SK-N-SH (cell line): ENCODE measurements at regions of chr1 and their contacts with region 1.

Region 1: GRCh38 chr1:43934101-43934985 is 742 bp downstream of the ARTN start:
- DNase-seq: peak; percentile 96
- H3K4me3 ChIP-seq: no peak overlapping the region; a peak in 1 of 4 replicates
- H3K27ac ChIP-seq: no peak overlapping the region
- H3K4me1 ChIP-seq: peaks cover 0 to 10% of the 10 kb centered on the region in 2 experiments; a peak in 2 of 4 replicates
- H3K27me3 ChIP-seq: no peaks in the 10 kb centered on the region
- CTCF ChIP-seq: peak; percentile 93
- EP300 ChIP-seq: no peak
- RAD21 ChIP-seq: peak; percentile 92

Region 2: DNA sequence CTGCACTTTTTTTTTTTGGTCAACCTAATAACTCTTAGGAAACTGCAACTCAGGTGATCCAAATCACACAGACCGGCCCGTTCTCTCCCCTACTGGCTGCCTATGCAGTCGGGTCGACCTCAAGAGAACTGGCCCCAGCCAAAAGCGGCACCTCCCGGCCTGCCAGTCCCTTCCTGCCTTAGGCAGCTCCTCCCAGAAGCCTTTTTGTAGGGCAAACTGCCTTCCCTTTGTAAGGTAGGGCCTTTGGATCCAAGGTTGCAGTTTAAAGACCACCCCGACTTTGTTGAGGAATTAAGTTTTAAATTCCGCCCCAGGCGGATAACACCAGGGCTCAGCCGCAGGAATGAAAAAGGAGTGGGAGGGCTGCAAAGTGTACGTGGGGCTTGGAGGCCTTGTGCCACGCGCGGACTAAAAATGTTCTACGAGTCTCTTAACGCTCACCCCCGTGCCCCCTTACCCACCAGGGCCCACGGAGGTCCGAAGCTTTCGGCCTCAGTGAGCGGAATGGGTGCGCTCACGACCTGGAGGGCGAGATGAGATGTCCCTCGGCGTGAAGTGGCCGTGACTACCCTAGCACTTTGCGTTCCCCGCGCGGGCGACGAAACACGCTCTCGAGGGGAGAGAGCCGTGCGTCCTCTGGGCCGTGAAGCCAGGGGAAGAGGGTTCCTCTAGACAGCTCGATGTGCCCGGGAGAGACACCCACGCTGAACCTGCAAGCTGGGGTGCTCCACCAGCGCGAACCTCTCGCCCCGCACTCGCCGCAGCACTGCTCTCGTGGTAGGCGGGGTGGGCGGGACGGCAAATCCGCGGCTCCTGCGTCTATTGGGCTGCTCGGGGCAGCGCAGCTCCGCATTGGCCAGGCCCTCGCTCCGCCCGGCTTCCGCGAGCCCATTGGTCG is 227.5 kb before region 1 on chr1:
- CTCF ChIA-PET with region 1: interaction called, 12 read pairs
- POLR2A ChIA-PET with region 1: interaction called, 4 read pairs
- DNase-seq: peak; percentile 97
- H3K4me3 ChIP-seq: peak overlapping the region; percentile 83 to 93
- H3K27ac ChIP-seq: peak overlapping the region; percentile 41 to 73; a peak in 3 of 4 replicates
- H3K4me1 ChIP-seq: peaks cover 13 to 24% of the 10 kb centered on the region in 2 experiments
- H3K27me3 ChIP-seq: no peaks in the 10 kb centered on the region
- CTCF ChIP-seq: no peak
- EP300 ChIP-seq: no peak
- RAD21 ChIP-seq: no peak

Region 3: GRCh38 chr1:43839056-43839455 is 95.3 kb before region 1 on chr1:
- CTCF ChIA-PET with region 1: interaction called, 20 read pairs
- POLR2A ChIA-PET with region 1: no interaction called
- DNase-seq: peak; percentile 51
- H3K4me3 ChIP-seq: no peak overlapping the region
- H3K27ac ChIP-seq: peak overlapping the region in 1 of 2 experiments; percentile 2; a peak in 2 of 4 replicates
- H3K4me1 ChIP-seq: peaks cover 31 to 43% of the 10 kb centered on the region in 2 experiments
- H3K27me3 ChIP-seq: no peaks in the 10 kb centered on the region
- CTCF ChIP-seq: no peak
- EP300 ChIP-seq: peak in 1 of 2 experiments; percentile 48; a peak in 1 of 4 replicates
- RAD21 ChIP-seq: no peak

Region 4: DNA sequence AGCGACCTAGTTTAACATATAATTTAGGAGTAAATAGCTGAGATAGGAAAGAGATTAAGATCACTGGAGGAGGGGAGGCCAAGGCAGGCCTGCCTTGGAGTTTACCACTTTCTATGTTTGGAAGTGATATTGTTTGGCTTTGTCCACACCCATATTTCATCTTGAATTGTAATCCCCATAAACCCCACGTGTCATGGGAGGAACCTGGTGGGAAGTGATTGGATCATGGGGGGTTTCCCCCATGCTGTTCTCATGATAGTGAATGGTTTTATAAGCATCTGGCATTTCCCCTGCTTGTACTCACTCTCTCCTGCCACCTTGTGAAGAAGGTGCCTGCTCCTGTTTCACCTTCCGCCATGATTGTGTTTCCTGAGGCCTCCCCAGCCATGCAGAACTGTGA is 59.0 kb before region 1 on chr1:
- CTCF ChIA-PET with region 1: interaction called, 23 read pairs
- POLR2A ChIA-PET with region 1: no interaction called
- DNase-seq: no peak
- H3K4me3 ChIP-seq: no peak overlapping the region
- H3K27ac ChIP-seq: no peak overlapping the region
- H3K4me1 ChIP-seq: peaks cover 0 to 15% of the 10 kb centered on the region in 2 experiments; a peak in 1 of 4 replicates
- H3K27me3 ChIP-seq: no peaks in the 10 kb centered on the region
- CTCF ChIP-seq: no peak
- EP300 ChIP-seq: no peak
- RAD21 ChIP-seq: no peak

Region 5: DNA sequence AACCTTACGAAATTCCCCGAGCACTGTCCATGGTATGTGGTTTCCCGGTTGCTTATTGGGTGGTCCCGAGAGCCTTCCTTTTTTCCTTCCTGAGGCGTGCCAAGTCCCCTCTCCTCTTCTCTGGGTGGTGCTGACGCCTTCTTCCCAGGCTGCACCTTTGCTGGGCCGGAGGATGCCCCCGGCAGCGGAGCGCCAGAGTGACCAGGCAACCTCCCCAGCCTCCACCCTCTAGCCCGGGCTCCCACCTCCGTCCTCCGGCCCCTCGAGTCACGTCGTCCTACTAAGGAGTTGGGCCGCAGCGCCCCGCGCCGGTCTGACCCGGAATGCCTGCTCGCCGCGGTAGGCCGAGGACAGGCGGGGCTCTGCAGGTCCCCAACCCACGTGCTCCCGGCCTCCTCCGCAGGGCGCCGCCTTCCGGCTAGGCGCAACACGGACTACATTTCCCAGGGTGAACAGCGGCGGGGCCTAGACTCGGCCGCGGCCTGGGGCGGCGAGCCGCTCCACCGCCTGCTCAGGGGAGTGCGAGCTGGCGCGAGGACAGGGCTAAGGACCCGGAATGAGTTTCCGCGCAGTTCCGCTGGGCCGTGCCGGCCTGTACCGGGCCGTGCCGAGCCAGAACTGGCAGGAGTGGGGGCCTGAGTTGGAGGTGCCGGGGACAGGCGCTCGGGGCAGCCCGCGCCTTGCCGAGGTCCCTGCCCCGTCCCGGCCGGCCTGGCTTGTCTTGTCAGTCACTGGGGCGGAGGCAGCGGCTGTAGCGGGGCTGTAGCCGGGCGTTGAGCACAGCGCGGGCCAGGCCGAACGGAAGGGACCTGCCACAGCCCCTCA is 12.1 kb after region 1 on chr1 and contains the start of gene IPO13:
- CTCF ChIA-PET with region 1: interaction called, 105 read pairs
- POLR2A ChIA-PET with region 1: interaction called, 10 read pairs
- DNase-seq: peak; percentile 98
- H3K4me3 ChIP-seq: peak within 1 kb of the TSS; percentile 79 to 93
- H3K27ac ChIP-seq: peak within 1 kb of the TSS; percentile 82 to 97
- H3K4me1 ChIP-seq: peaks cover 12 to 24% of the 10 kb centered on the region in 2 experiments
- H3K27me3 ChIP-seq: no peaks in the 10 kb centered on the region
- CTCF ChIP-seq: peak; percentile 68
- EP300 ChIP-seq: no peak
- RAD21 ChIP-seq: peak; percentile 59
- polyA plus RNA-seq, gene IPO13: 15.5 and 16.7 TPM in 2 replicates

Region 6: GRCh38 chr1:44049839-44050238 is 115.5 kb after region 1 on chr1:
- CTCF ChIA-PET with region 1: interaction called, 22 read pairs
- POLR2A ChIA-PET with region 1: no interaction called
- DNase-seq: no peak
- H3K4me3 ChIP-seq: peak overlapping the region in 1 of 2 experiments; percentile 32; a peak in 1 of 4 replicates
- H3K27ac ChIP-seq: peak overlapping the region in 1 of 2 experiments; percentile 91; a peak in 2 of 4 replicates
- H3K4me1 ChIP-seq: peaks cover 0 to 17% of the 10 kb centered on the region in 2 experiments
- H3K27me3 ChIP-seq: no peaks in the 10 kb centered on the region
- CTCF ChIP-seq: no peak
- EP300 ChIP-seq: peak in 1 of 2 experiments; percentile 89; a peak in 2 of 4 replicates
- RAD21 ChIP-seq: no peak